B cell (primary cell): ENCODE measurements at regions of chr6 and their contacts with region 1.

Region 1: DNA sequence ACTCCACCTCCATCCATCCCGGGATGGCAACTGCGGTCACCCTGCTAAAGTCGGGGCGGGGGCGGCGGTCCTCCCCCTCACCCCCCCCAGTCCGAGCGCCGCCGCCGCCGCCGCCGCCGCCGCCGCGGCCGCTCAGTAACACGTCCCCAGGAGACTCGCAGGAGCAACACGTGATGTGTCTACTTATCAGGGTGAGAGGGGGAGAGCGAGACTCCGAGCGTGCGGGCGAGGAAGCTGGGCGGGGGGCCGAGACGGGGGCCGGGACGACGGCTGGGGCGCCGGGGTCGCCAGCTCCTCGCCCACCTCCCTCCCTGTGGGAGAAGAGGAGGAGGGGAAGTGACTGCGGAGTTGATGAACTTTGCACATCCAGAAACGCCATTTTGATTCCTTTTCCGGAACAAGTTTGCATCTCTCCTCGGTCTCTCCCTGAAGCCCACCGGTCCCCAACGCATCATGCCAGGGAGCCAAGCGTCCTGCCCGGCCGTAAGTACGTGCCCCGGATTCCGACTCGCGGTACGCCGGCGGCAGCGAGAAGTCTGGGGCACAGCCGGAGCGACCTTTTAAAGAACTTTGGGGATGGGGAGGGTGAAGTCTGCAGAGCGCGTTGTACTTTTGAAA is at the start of gene RREB1:
- DNase-seq: peak; percentile 81
- ATAC-seq: peak; percentile 56
- H3K4me3 ChIP-seq: peak within 1 kb of the TSS; percentile 26 to 98 (median 94)
- H3K4me3 Mint-ChIP-seq: peak within 1 kb of the TSS; percentile 99
- H3K27ac ChIP-seq: peak within 1 kb of the TSS; percentile 73 to 88
- H3K27ac Mint-ChIP-seq: peak within 1 kb of the TSS; percentile 96
- H3K4me1 ChIP-seq: peaks cover 23 to 29% of the 10 kb centered on the region in 2 donors
- H3K4me1 Mint-ChIP-seq: peaks cover 37% of the 10 kb centered on the region
- H3K27me3 ChIP-seq: no peaks in the 10 kb centered on the region
- H3K27me3 Mint-ChIP-seq: no peaks in the 10 kb centered on the region
- CTCF ChIP-seq: no peak
- total RNA-seq, gene RREB1: 58.6 and 62.5 TPM in 2 replicates

Region 2: GRCh38 chr6:6834356-6835222 is 273.1 kb before region 1 on chr6:
- CTCF ChIA-PET with region 1: no interaction called
- POLR2A ChIA-PET with region 1: no interaction called
- intact Hi-C with region 1: no loop called
- DNase-seq: no peak
- ATAC-seq: no peak
- H3K4me3 ChIP-seq: no peak overlapping the region
- H3K4me3 Mint-ChIP-seq: no peak overlapping the region
- H3K27ac ChIP-seq: no peak overlapping the region
- H3K27ac Mint-ChIP-seq: no peak overlapping the region
- H3K4me1 ChIP-seq: no peaks in the 10 kb centered on the region
- H3K4me1 Mint-ChIP-seq: no peaks in the 10 kb centered on the region
- H3K27me3 ChIP-seq: peaks cover 0 to 4% (median 0%) of the 10 kb centered on the region in 4 experiments
- H3K27me3 Mint-ChIP-seq: peaks cover 20% of the 10 kb centered on the region
- CTCF ChIP-seq: no peak

Region 3: GRCh38 chr6:7073821-7074525 is 33.7 kb before region 1 on chr6:
- CTCF ChIA-PET with region 1: no interaction called
- POLR2A ChIA-PET with region 1: interaction called, 4 read pairs
- intact Hi-C with region 1: loop called (anchors 5 kb)
- DNase-seq: peak; percentile 88
- ATAC-seq: peak; percentile 100
- H3K4me3 ChIP-seq: peak overlapping the region in 3 of 5 experiments; percentile 21 to 47 (median 37)
- H3K4me3 Mint-ChIP-seq: peak overlapping the region; percentile 72
- H3K27ac ChIP-seq: peak overlapping the region; percentile 43 to 75
- H3K27ac Mint-ChIP-seq: peak overlapping the region; percentile 79
- H3K4me1 ChIP-seq: peaks cover 6 to 17% of the 10 kb centered on the region in 2 donors
- H3K4me1 Mint-ChIP-seq: peaks cover 10% of the 10 kb centered on the region
- H3K27me3 ChIP-seq: no peaks in the 10 kb centered on the region
- H3K27me3 Mint-ChIP-seq: no peaks in the 10 kb centered on the region
- CTCF ChIP-seq: no peak

Region 4: GRCh38 chr6:7140631-7141378 is 33.1 kb after region 1 on chr6:
- CTCF ChIA-PET with region 1: interaction called, 3 read pairs
- POLR2A ChIA-PET with region 1: interaction called, 4 read pairs
- intact Hi-C with region 1: loop called (anchors 1 kb)
- DNase-seq: peak; percentile 84
- ATAC-seq: peak; percentile 84
- H3K4me3 ChIP-seq: peak overlapping the region; percentile 62 to 73 (median 69)
- H3K4me3 Mint-ChIP-seq: peak overlapping the region; percentile 87
- H3K27ac ChIP-seq: peak overlapping the region; percentile 74 to 79
- H3K27ac Mint-ChIP-seq: peak overlapping the region; percentile 90
- H3K4me1 ChIP-seq: peaks cover 53 to 66% of the 10 kb centered on the region in 2 donors
- H3K4me1 Mint-ChIP-seq: peaks cover 74% of the 10 kb centered on the region
- H3K27me3 ChIP-seq: no peaks in the 10 kb centered on the region
- H3K27me3 Mint-ChIP-seq: no peaks in the 10 kb centered on the region
- CTCF ChIP-seq: no peak

Region 5: GRCh38 chr6:7188492-7188891 is 80.8 kb after region 1 on chr6:
- CTCF ChIA-PET with region 1: interaction called, 3 read pairs
- POLR2A ChIA-PET with region 1: no interaction called
- intact Hi-C with region 1: loop called (anchors 1 kb)
- DNase-seq: peak; percentile 51
- ATAC-seq: peak; percentile 79
- H3K4me3 ChIP-seq: no peak overlapping the region
- H3K4me3 Mint-ChIP-seq: peak overlapping the region; percentile 33
- H3K27ac ChIP-seq: peak overlapping the region in 1 of 2 donors; percentile 47
- H3K27ac Mint-ChIP-seq: peak overlapping the region; percentile 71
- H3K4me1 ChIP-seq: peaks cover 8 to 14% of the 10 kb centered on the region in 2 donors
- H3K4me1 Mint-ChIP-seq: peaks cover 16% of the 10 kb centered on the region
- H3K27me3 ChIP-seq: no peaks in the 10 kb centered on the region
- H3K27me3 Mint-ChIP-seq: no peaks in the 10 kb centered on the region
- CTCF ChIP-seq: no peak

Region 6: DNA sequence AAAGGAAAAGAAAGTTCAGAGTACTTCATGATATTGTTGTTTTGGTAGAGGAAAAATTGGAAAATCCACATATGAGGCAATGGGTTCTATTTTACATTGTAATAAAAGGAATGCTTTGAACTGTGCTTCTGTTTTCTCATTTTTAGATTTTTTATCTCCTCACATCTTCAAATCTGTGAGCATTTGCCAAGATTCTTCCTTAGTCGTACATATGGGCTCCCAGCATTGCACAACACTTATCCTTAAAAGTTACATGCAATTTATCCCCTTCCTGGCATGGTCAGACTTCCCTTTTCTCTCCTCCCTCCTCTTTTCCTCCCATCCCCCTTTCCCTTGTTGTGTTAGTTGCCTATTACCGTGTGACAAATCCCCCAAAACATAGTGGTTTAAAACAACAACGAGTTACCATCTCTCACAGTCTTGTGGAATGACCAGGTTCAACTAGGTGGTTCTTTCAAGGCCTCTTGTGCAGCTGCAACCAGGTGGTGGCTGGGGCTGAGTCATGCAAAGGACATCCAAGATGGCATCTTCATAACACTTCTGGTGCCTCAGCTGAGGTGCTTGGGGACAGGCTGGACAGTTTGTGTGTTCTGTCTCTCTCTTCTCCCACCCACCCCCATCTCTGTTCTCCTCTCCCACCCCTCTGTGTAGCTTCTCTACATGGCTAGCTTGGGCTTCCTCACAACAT is 734.2 kb after region 1 on chr6:
- CTCF ChIA-PET with region 1: no interaction called
- POLR2A ChIA-PET with region 1: no interaction called
- intact Hi-C with region 1: no loop called
- DNase-seq: no peak
- ATAC-seq: no peak
- H3K4me3 ChIP-seq: no peak overlapping the region
- H3K4me3 Mint-ChIP-seq: no peak overlapping the region
- H3K27ac ChIP-seq: no peak overlapping the region
- H3K27ac Mint-ChIP-seq: no peak overlapping the region
- H3K4me1 ChIP-seq: no peaks in the 10 kb centered on the region
- H3K4me1 Mint-ChIP-seq: no peaks in the 10 kb centered on the region
- H3K27me3 ChIP-seq: peaks cover 0 to 3% (median 0%) of the 10 kb centered on the region in 4 experiments
- H3K27me3 Mint-ChIP-seq: peaks cover 19% of the 10 kb centered on the region
- CTCF ChIP-seq: no peak